ENCODE measurements at regions of chr21 and their contacts with region 1.

Region 1: GRCh38 chr21:41777951-41778874 is 11.4 kb upstream of the RIPK4 start:
- DNase-seq: peak; percentile 88 to 94 (median 91)
- H3K4me3 ChIP-seq: no peak overlapping the region
- H3K27ac ChIP-seq: no peak overlapping the region
- H3K4me1 ChIP-seq: peaks cover 0 to 17% (median 8%) of the 10 kb centered on the region in 3 donors
- H3K27me3 ChIP-seq: peaks cover 2% of the 10 kb centered on the region
- CTCF ChIP-seq: peak; percentile 92

Region 2: GRCh38 chr21:41612674-41613532 is 165.3 kb before region 1 on chr21:
- intact Hi-C with region 1: loop called (anchors 5 kb)
- DNase-seq: peak; percentile 82 to 91 (median 84)
- H3K4me3 ChIP-seq: no peak overlapping the region
- H3K27ac ChIP-seq: peak overlapping the region; percentile 20 to 24
- H3K4me1 ChIP-seq: peaks cover 0 to 11% (median 6%) of the 10 kb centered on the region in 3 donors
- H3K27me3 ChIP-seq: no peaks in the 10 kb centered on the region
- CTCF ChIP-seq: peak; percentile 75

Region 3: GRCh38 chr21:42062236-42063022 is 284.2 kb after region 1 on chr21:
- intact Hi-C with region 1: no loop called
- DNase-seq: peak in 1 of 5 donors; percentile 82
- H3K4me3 ChIP-seq: no peak overlapping the region
- H3K27ac ChIP-seq: no peak overlapping the region
- H3K4me1 ChIP-seq: peaks cover 0 to 8% (median 0%) of the 10 kb centered on the region in 3 donors
- H3K27me3 ChIP-seq: no peaks in the 10 kb centered on the region
- CTCF ChIP-seq: no peak